OCI-LY7 (cell line): ENCODE measurements at regions of chr19 and their contacts with region 1.

Region 1: DNA sequence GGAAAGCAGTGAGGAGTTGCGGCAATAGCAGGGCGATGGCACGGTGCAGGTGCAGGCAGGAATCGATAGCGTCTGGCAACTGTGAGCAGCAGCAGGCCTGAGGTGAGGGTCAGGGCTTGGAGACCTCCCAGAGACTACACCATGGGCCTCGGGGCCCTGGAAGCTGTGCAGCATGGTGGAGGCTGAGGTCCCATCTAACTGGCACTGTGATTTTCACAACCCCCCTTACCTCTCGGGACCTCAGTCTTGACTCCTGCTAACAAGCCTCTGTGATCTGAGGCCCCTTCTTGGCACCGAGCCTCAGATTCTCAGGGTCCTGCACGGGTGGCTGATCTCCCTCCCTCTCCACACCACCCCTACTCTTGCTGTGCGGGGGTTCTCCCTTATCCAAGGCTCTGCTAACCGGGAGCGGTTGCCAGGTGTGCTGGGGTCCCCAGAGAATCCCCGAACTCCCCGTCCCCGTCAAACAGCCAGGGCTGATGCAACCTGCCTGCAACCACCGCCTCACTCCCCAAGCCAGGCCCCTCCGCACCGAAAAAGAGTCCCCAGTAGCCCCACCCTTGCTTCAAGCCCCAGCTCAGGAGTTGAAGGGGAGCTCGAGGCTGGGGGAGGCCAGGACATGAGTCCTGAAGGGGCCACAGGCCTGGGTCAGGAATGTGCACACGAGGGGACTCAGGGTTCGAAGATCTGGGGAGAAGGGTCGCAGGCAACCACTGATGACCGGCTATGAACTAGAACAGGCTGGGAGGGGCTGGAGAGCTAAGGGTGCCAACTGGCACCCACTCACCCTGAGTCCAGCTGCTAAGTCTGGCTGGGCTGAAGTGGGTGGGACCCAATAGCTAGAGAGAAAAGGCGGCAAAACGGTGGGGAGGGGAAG is 4.8 kb upstream of the ATF5 start:
- DNase-seq: peak; percentile 93
- H3K4me3 ChIP-seq: peak overlapping the region; percentile 62
- H3K27ac ChIP-seq: peak overlapping the region; percentile 85
- H3K4me1 ChIP-seq: peaks cover 62% of the 10 kb centered on the region
- CTCF ChIP-seq: no peak

Region 2: DNA sequence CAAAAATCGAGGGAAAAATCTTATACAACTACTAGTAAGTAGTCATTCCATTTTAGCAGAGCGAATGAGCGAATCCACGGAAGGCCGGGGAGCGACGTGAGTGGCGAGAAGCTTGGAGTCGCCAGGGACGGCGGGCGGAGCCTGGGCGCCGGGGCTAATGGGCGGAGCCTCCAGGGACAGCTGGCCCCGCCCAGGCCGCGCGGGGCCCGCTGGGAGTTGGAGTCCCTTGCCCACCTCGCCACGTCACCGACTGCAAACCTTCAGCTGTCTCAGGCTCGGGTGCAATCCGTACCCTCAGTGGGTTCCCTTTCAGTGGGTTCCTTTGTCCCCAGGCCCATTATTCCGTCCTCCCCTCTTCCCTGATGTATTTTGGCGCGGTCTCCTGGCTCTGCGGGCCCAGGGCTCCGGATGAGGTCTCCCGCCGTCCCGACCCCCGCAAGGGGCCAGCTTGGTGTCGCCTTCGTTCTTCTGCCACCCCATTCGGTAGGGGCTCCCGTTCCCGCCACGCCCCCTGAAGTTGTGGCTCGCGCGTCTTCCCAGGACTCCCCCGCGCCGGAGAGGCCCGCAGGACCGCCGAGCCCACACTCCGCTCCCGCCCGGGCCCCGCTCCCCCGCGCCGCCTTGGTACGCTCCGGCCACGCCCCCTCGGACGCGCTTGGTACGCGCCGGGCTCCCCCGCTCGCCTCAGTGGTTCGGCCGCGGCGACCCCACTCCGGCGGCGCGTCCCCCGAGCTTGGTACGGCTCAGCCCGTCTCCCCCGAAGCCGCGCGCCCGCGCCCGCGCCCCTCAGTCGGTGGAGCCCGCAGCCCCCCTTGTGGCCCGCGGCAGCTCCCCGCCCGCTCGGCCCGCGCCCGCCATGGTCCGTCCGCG is 73.5 kb before region 1 on chr19 and contains the start of gene PTOV1:
- CTCF ChIA-PET with region 1: no interaction called
- POLR2A ChIA-PET with region 1: no interaction called
- intact Hi-C with region 1: loop called (anchors 1 kb)
- DNase-seq: peak; percentile 97
- H3K4me3 ChIP-seq: peak within 1 kb of the TSS; percentile 88
- H3K27ac ChIP-seq: peak within 1 kb of the TSS; percentile 87
- H3K4me1 ChIP-seq: peaks cover 28% of the 10 kb centered on the region
- CTCF ChIP-seq: no peak
- total RNA-seq, gene PTOV1: 101 and 124 TPM in 2 replicates

Region 3: DNA sequence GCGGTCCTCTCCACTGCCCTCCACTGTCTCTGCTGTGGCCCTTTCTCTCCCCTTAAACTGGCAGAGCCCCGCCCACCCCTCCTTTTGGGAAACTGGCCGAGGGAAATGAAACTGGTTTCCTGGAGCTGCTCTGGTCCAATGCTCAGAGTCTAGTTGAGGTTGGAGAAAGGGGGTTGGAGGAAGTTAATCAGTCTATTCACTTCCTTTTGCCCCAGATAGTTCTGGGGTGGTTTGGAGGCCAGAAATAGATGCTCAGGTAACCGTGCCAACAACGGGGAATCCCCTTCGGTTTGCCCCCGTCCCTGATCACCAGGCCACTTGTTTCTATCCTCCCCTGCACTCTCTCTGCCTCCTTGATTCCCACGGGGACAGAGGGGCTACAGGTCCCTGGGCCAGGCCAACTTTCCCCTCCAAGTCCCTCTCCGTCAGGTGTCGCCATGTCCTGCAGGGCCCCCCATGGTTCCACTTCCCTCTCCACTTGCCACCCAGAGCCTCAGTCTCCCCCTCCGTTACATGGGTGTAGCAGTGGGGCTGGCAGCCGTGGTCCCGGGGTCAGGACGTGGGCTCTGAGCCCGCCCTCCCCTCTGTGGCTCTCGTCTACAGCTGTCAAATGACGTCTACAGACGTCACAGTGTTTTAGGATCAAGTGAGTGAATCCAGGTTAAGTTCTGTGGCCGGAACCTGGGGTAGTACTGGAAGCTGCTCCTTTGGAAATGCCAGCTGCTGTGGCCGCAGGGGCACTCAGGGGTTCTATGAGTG is 27.2 kb before region 1 on chr19 and contains the start of gene IL4I1:
- CTCF ChIA-PET with region 1: no interaction called
- POLR2A ChIA-PET with region 1: interaction called, 6 read pairs
- intact Hi-C with region 1: loop called (anchors 1 kb)
- DNase-seq: peak; percentile 77
- H3K4me3 ChIP-seq: peak within 1 kb of the TSS; percentile 55
- H3K27ac ChIP-seq: peak within 1 kb of the TSS; percentile 66
- H3K4me1 ChIP-seq: peaks cover 43% of the 10 kb centered on the region
- CTCF ChIP-seq: no peak
- total RNA-seq, gene IL4I1: 0.25 and 0.39 TPM in 2 replicates